CD4-positive, alpha-beta memory T cell (primary cell): ENCODE measurements at regions of chr10 and their contacts with region 1.

Region 1: DNA sequence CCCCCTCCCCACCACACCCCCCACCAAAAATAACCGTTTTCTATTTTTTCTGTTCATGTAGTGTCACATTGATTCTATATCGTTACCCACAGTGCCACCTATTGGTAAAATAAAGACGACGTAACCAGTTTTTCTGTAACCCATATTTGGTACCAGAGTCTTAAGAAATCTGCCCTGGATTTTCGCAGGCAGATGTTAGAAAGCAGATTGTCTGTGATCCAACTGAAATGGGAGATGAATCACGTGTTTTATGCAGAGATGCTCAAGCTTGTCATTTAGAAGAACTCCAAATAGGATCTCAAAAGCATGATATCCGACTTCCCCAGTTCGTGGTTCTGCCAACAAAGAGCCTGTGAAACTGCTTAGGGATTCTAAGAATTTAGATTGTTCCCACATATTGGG is 261.1 kb upstream of the CSTF2T start:
- DNase-seq: peak in 4 of 5 donors; percentile 14 to 27 (median 21)
- H3K4me3 ChIP-seq: no peak overlapping the region
- H3K4me3 Mint-ChIP-seq: no peak overlapping the region
- H3K27ac ChIP-seq: no peak overlapping the region
- H3K27ac Mint-ChIP-seq: no peak overlapping the region
- H3K4me1 ChIP-seq: no peaks in the 10 kb centered on the region
- H3K4me1 Mint-ChIP-seq: peaks cover 0 to 2% (median 0%) of the 10 kb centered on the region in 4 donors
- H3K27me3 ChIP-seq: no peaks in the 10 kb centered on the region
- H3K27me3 Mint-ChIP-seq: peaks cover 2 to 10% of the 10 kb centered on the region in 2 donors

Region 2: DNA sequence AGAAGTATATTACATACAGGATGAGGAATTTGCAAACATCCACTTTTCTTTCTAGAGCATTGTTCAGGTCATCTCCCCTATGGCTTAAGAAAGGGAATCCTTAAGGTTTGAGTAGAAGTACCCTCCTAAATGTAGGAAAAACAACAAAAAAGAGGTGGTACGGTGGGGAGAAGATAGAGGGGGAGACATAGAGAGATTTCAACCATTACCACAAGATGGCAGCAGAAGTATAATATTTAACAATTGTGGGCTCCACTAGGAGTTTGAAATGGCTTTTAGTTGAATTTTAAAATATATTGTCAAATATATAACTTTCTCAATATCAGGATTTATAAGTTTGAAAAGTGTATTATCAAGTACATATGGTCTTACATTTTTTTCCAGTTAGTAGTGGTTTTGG is 958.9 kb before region 1 on chr10:
- CTCF ChIA-PET with region 1: interaction called, 4 read pairs
- POLR2A ChIA-PET with region 1: no interaction called
- intact Hi-C with region 1: loop called (anchors 1 kb)
- DNase-seq: no peak
- H3K4me3 ChIP-seq: no peak overlapping the region
- H3K4me3 Mint-ChIP-seq: no peak overlapping the region
- H3K27ac ChIP-seq: no peak overlapping the region
- H3K27ac Mint-ChIP-seq: no peak overlapping the region
- H3K4me1 ChIP-seq: no peaks in the 10 kb centered on the region
- H3K4me1 Mint-ChIP-seq: no peaks in the 10 kb centered on the region
- H3K27me3 ChIP-seq: no peaks in the 10 kb centered on the region
- H3K27me3 Mint-ChIP-seq: peaks cover 5 to 7% of the 10 kb centered on the region in 2 donors

Region 3: DNA sequence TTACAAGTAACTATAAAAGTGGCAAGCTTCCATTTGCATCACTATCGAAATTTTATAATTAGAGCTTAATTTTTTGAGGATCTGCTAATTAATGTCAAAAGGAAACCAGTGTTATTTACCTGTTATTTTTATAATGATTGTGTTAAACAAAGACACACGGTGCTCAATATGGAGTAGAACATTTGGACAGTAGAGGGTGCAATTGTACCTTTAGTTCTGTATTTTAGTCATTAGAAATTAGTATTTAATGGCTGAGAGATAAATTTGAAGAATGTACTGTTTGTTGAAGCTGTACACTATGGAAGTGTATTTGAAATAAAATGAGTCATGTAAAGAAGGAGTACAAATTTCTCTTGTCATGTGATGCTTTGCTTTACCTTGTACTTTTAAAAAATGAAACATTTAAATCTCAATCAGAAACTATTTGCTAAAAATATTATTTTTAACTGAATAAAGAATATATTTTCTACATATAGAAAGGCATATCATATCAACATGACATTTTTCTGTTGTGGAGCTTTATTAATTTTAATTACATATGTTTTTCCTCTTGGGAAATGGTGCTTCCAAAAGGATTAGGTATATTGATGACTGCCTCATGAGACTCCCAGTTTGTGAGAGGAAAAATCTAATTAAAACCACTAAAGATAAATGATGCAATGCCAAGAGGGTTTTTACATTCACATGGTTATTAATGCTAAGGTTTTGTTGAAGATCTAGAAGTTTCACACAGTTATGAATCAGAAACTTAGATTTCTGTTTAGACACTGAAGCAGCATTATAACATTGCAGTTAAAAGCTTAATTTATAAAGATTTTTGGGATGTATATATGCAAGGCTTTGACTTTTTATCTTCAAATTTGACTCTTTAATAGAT is 896.6 kb before region 1 on chr10:
- CTCF ChIA-PET with region 1: interaction called, 10 read pairs
- POLR2A ChIA-PET with region 1: no interaction called
- intact Hi-C with region 1: loop called (anchors 2 kb)
- DNase-seq: no peak
- H3K4me3 ChIP-seq: no peak overlapping the region
- H3K4me3 Mint-ChIP-seq: no peak overlapping the region
- H3K27ac ChIP-seq: no peak overlapping the region
- H3K27ac Mint-ChIP-seq: no peak overlapping the region
- H3K4me1 ChIP-seq: no peaks in the 10 kb centered on the region
- H3K4me1 Mint-ChIP-seq: no peaks in the 10 kb centered on the region
- H3K27me3 ChIP-seq: no peaks in the 10 kb centered on the region
- H3K27me3 Mint-ChIP-seq: peaks cover 0 to 3% of the 10 kb centered on the region in 2 donors

Region 4: DNA sequence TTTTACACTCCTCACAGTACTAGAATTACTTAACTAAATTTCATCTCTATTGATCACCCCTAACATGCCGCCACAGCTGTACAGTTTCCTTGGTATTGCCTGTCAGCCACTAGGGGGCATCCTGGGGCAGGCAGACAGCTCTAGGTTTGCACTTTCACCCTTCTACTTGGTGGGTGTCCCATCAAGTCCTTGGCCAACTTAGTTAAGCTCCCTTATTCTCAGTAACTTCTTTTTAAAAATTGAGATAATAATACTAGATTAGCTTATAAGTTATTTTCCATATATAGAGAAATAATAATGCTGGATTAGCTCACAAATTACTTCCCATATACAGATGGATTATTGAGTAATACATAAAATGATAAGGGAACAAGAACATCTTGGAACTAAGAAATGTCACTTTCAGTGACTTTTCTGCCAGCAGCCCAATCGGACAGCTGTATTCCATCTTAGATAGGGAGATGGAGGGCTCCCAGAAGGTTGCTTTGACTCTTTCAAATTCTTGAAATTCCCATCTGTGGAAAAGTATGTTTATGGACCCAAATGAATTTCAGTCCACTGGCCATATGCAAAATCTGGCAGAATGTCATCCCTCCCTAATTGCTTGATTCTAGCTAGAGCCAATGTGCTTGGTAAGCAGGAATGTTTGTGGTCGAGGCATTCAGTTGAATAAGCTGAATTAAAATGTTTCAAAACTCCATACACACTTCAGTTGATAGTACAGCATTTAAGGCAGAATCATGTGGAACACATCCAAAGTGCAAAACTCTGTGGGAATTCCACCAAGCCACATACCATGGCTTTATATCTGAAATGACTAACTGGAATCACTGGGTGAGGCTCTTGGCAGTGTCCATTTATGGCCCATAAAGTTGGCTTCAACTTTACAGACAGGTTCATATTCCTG is 570.8 kb before region 1 on chr10:
- CTCF ChIA-PET with region 1: interaction called, 17 read pairs
- POLR2A ChIA-PET with region 1: no interaction called
- intact Hi-C with region 1: no loop called
- DNase-seq: peak in 3 of 5 donors; percentile 14 to 33 (median 16)
- H3K4me3 ChIP-seq: no peak overlapping the region
- H3K4me3 Mint-ChIP-seq: no peak overlapping the region
- H3K27ac ChIP-seq: no peak overlapping the region
- H3K27ac Mint-ChIP-seq: no peak overlapping the region
- H3K4me1 ChIP-seq: no peaks in the 10 kb centered on the region
- H3K4me1 Mint-ChIP-seq: peaks cover 0 to 2% (median 0%) of the 10 kb centered on the region in 4 donors
- H3K27me3 ChIP-seq: no peaks in the 10 kb centered on the region
- H3K27me3 Mint-ChIP-seq: no peaks in the 10 kb centered on the region

Region 5: DNA sequence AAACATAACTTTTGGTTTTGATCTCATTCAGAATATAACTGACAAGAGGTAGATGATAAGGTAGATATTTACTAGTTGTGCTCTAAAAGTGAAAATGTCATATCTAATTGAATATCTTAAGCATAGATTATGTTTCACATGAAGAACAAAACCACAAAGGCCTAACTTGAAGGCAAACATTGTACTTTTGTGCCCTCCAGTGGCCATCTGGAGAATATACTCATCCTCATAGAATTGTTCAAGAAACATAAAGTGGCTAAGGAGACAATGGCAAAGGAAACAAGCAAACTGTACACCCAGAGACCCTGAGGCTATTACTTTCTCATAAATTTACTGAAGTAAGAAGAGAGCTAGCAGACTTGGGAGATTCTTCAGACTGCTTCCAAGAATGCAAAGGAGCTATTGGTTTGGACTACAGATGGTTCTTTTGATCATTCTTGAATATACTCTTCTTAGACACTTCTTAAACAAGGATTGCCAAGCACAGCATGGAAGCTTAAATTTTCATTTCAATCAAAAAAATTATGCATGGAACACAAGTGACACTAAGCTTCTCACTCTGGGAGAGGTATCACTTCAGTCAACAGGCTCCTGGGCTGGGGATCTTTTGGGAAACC is 255.4 kb after region 1 on chr10:
- CTCF ChIA-PET with region 1: no interaction called
- POLR2A ChIA-PET with region 1: no interaction called
- intact Hi-C with region 1: loop called (anchors 10 kb)
- DNase-seq: peak; percentile 30 to 50 (median 33)
- H3K4me3 ChIP-seq: no peak overlapping the region
- H3K4me3 Mint-ChIP-seq: no peak overlapping the region
- H3K27ac ChIP-seq: no peak overlapping the region
- H3K27ac Mint-ChIP-seq: no peak overlapping the region
- H3K4me1 ChIP-seq: no peaks in the 10 kb centered on the region
- H3K4me1 Mint-ChIP-seq: no peaks in the 10 kb centered on the region
- H3K27me3 ChIP-seq: no peaks in the 10 kb centered on the region
- H3K27me3 Mint-ChIP-seq: no peaks in the 10 kb centered on the region